ENCODE measurements at regions of chr9 and their contacts with region 1.

Region 1: GRCh38 chr9:125374443-125375309 is 113.0 kb downstream of the GAPVD1 start:
- DNase-seq: peak; percentile 82

Region 2: DNA sequence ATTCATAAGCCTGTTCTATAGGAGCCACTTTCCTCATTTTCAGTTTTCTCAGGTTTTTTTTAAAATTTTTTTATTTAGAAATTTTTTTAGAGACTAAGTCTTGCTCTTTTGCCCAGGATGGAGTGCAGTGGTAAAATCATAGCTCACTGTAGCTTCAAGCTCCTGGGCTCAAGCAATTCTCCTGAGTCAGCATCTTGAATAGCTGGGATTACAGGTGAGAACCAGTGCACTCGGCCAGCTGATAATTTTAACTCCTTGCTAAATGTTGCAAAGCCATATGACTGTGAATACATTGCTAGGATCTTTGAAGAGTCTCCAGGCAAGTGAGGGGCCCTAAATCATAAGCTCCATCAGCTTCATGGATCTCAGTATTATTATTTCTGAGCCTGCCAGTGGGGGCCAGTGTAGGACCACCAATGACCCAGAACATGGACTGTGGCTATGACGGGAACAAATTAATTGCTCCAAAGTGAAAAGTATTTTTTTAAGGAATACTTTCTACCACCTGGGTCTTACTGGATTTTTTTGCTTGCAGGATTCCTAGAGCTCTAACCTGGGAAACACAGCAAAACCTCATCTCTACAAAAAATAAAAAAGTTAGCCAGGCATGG is 118.8 kb before region 1 on chr9:
- intact Hi-C with region 1: loop called (anchors 10 kb)
- DNase-seq: no peak